ENCODE measurements at regions of chr12 and their contacts with region 1.

Region 1: GRCh38 chr12:94149781-94150239 is 1.4 kb downstream of the PLXNC1 start:
- DNase-seq: peak in 1 of 2 experiments; percentile 62
- H3K4me3 ChIP-seq: peak overlapping the region; percentile 82
- H3K4me3 Mint-ChIP-seq: peak overlapping the region; percentile 88
- H3K27ac Mint-ChIP-seq: peak overlapping the region; percentile 47
- H3K4me1 ChIP-seq: peaks cover 47% of the 10 kb centered on the region
- H3K4me1 Mint-ChIP-seq: peaks cover 35% of the 10 kb centered on the region
- H3K27me3 ChIP-seq: no peaks in the 10 kb centered on the region
- H3K27me3 Mint-ChIP-seq: no peaks in the 10 kb centered on the region
- CTCF ChIP-seq: no peak

Region 2: GRCh38 chr12:94167756-94168416 is 18.1 kb after region 1 on chr12:
- CTCF ChIA-PET with region 1: interaction called, 5 read pairs
- POLR2A ChIA-PET with region 1: interaction called, 4 read pairs
- intact Hi-C with region 1: loop called (anchors 1 kb)
- DNase-seq: no peak
- H3K4me3 ChIP-seq: no peak overlapping the region
- H3K4me3 Mint-ChIP-seq: no peak overlapping the region
- H3K27ac Mint-ChIP-seq: peak overlapping the region; percentile 69
- H3K4me1 ChIP-seq: peaks cover 58% of the 10 kb centered on the region
- H3K4me1 Mint-ChIP-seq: peaks cover 45% of the 10 kb centered on the region
- H3K27me3 ChIP-seq: no peaks in the 10 kb centered on the region
- H3K27me3 Mint-ChIP-seq: no peaks in the 10 kb centered on the region
- CTCF ChIP-seq: no peak

Region 3: GRCh38 chr12:94172973-94173372 is 23.2 kb after region 1 on chr12:
- CTCF ChIA-PET with region 1: interaction called, 5 read pairs
- POLR2A ChIA-PET with region 1: interaction called, 4 read pairs
- intact Hi-C with region 1: loop called (anchors 1 kb)
- DNase-seq: peak; percentile 71 to 77
- H3K4me3 ChIP-seq: no peak overlapping the region
- H3K4me3 Mint-ChIP-seq: peak overlapping the region; percentile 70
- H3K27ac Mint-ChIP-seq: peak overlapping the region; percentile 88
- H3K4me1 ChIP-seq: peaks cover 67% of the 10 kb centered on the region
- H3K4me1 Mint-ChIP-seq: peaks cover 59% of the 10 kb centered on the region
- H3K27me3 ChIP-seq: no peaks in the 10 kb centered on the region
- H3K27me3 Mint-ChIP-seq: no peaks in the 10 kb centered on the region
- CTCF ChIP-seq: no peak

Region 4: GRCh38 chr12:94184995-94185719 is 35.3 kb after region 1 on chr12:
- CTCF ChIA-PET with region 1: interaction called, 7 read pairs
- POLR2A ChIA-PET with region 1: interaction called, 12 read pairs
- intact Hi-C with region 1: loop called (anchors 1 kb)
- DNase-seq: no peak
- H3K4me3 ChIP-seq: no peak overlapping the region
- H3K4me3 Mint-ChIP-seq: no peak overlapping the region
- H3K27ac Mint-ChIP-seq: peak overlapping the region; percentile 91
- H3K4me1 ChIP-seq: peaks cover 57% of the 10 kb centered on the region
- H3K4me1 Mint-ChIP-seq: peaks cover 27% of the 10 kb centered on the region
- H3K27me3 ChIP-seq: no peaks in the 10 kb centered on the region
- H3K27me3 Mint-ChIP-seq: no peaks in the 10 kb centered on the region
- CTCF ChIP-seq: no peak

Region 5: DNA sequence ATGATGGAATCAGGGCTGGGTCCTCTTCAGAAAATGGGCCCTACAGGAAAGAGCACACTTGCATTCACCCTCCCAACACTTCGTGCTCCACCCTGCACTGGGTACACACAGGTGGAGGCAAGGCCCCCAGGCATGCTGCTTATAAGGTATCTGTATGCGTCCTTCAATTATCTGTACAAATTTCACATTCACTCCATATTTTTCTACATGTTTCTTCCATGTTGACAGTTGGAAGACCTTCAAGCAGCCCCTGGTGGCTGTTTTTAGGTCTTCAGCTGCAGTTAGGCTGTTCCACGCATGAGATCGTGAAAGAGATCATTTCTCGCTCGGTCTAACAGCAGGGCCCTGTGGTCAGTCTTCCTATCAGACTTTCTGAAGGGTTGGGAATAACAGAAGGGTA is 45.6 kb after region 1 on chr12:
- CTCF ChIA-PET with region 1: interaction called, 3 read pairs
- POLR2A ChIA-PET with region 1: no interaction called
- intact Hi-C with region 1: loop called (anchors 2 kb)
- DNase-seq: peak in 1 of 2 experiments; percentile 28
- H3K4me3 ChIP-seq: no peak overlapping the region
- H3K4me3 Mint-ChIP-seq: no peak overlapping the region
- H3K27ac Mint-ChIP-seq: peak overlapping the region; percentile 78
- H3K4me1 ChIP-seq: no peaks in the 10 kb centered on the region
- H3K4me1 Mint-ChIP-seq: peaks cover 6% of the 10 kb centered on the region
- H3K27me3 ChIP-seq: no peaks in the 10 kb centered on the region
- H3K27me3 Mint-ChIP-seq: no peaks in the 10 kb centered on the region
- CTCF ChIP-seq: peak; percentile 33 to 61

Region 6: GRCh38 chr12:94435511-94435927 is 285.7 kb after region 1 on chr12:
- CTCF ChIA-PET with region 1: no interaction called
- POLR2A ChIA-PET with region 1: no interaction called
- intact Hi-C with region 1: loop called (anchors 2 kb)
- DNase-seq: no peak
- H3K4me3 ChIP-seq: no peak overlapping the region
- H3K4me3 Mint-ChIP-seq: no peak overlapping the region
- H3K27ac Mint-ChIP-seq: peak overlapping the region; percentile 9
- H3K4me1 ChIP-seq: peaks cover 34% of the 10 kb centered on the region
- H3K4me1 Mint-ChIP-seq: peaks cover 27% of the 10 kb centered on the region
- H3K27me3 ChIP-seq: no peaks in the 10 kb centered on the region
- H3K27me3 Mint-ChIP-seq: no peaks in the 10 kb centered on the region
- CTCF ChIP-seq: no peak

Region 7: DNA sequence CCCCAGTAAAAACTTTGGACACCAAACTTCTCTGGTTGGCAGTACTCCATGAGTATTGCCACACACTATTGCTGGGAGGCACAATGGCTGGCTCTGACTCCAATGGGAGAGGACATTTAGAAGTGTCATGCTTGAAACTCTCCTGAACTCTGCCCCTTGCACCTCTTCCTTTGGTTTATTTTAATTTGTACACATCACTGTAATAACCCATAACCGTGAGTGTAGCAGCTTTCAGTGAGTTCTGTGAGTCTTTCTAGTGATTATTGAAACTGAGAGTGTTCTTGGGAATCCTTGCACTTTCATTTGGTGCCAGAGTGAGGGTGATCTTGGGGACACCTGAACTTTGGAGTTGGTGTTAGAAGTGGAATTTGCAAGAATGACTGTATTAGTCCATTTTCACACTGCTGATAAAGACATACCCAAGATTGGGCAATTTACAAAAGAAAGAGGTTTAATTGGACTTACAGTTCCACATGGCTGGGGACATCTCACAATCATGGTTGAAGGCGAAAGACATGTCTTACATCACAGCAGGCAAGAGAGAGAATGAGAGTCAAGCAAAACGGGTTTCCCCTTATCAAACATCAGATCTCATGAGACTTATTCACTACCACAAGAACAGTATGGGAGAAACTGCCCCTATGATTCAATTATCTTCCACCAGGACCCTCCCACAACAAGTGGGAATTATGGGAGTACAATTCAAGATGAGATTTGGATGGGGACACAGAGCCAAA is 351.2 kb after region 1 on chr12:
- CTCF ChIA-PET with region 1: no interaction called
- POLR2A ChIA-PET with region 1: no interaction called
- intact Hi-C with region 1: no loop called
- DNase-seq: no peak
- H3K4me3 ChIP-seq: no peak overlapping the region
- H3K4me3 Mint-ChIP-seq: no peak overlapping the region
- H3K27ac Mint-ChIP-seq: no peak overlapping the region
- H3K4me1 ChIP-seq: no peaks in the 10 kb centered on the region
- H3K4me1 Mint-ChIP-seq: no peaks in the 10 kb centered on the region
- H3K27me3 ChIP-seq: no peaks in the 10 kb centered on the region
- H3K27me3 Mint-ChIP-seq: peaks cover 2% of the 10 kb centered on the region
- CTCF ChIP-seq: no peak

Region 8: GRCh38 chr12:94532490-94533422 is 382.9 kb after region 1 on chr12:
- CTCF ChIA-PET with region 1: no interaction called
- POLR2A ChIA-PET with region 1: no interaction called
- intact Hi-C with region 1: loop called (anchors 2 kb)
- DNase-seq: peak; percentile 65 to 81
- H3K4me3 ChIP-seq: no peak overlapping the region
- H3K4me3 Mint-ChIP-seq: no peak overlapping the region
- H3K27ac Mint-ChIP-seq: no peak overlapping the region
- H3K4me1 ChIP-seq: peaks cover 4% of the 10 kb centered on the region; the same call in 1 of the 2 replicates
- H3K4me1 Mint-ChIP-seq: peaks cover 17% of the 10 kb centered on the region
- H3K27me3 ChIP-seq: no peaks in the 10 kb centered on the region
- H3K27me3 Mint-ChIP-seq: no peaks in the 10 kb centered on the region
- CTCF ChIP-seq: peak; percentile 77 to 86